IMR-90 (cell line): ENCODE measurements at regions of chr1 and their contacts with region 1.

Region 1: DNA sequence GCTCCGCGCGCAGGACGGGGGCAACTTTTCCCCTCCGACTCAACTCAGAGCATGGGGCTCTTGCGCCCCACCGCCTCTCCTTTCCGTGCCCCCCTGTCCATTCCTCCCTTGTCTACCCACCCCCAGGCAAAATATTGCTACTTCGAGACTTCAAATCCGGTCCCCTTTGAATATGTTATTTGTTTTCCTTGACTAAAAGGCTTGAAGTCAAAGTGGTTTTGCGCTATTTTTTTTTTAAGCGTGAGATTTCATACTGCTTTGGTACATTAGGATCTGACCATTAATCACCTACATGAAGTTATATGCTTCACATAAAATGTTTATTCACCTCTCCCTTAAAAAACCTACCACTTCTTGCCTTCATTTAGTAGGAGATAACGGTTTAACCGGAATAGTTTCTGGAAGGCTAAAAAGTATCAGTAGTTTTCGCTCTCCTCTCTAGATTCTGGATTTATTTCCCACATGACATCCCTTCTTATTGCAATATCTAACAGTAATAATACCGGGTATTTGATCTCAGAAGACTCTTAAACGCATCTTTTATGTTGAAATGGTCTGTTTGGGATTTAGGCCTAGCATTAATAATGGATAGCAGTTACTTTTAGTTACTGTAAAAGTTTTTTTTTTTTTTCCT is 1.6 kb downstream of the NFIA start:
- DNase-seq: no peak
- ATAC-seq: no peak
- H3K4me3 ChIP-seq: peak overlapping the region; percentile 65
- H3K27ac ChIP-seq: 0 out of 2 replicates have a peak overlapping the region, but pooled peaks have one; percentile 15
- H3K4me1 ChIP-seq: no peaks in the 10 kb centered on the region
- H3K27me3 ChIP-seq: no peaks in the 10 kb centered on the region
- CTCF ChIP-seq: no peak
- POLR2A ChIP-seq: no peak
- RAD21 ChIP-seq: no peak

Region 2: GRCh38 chr1:61098333-61098732 is 14.4 kb after region 1 on chr1:
- CTCF ChIA-PET with region 1: no interaction called
- POLR2A ChIA-PET with region 1: no interaction called
- dilution Hi-C with region 1: no loop called
- in situ Hi-C with region 1: no loop called
- intact Hi-C with region 1: loop called (anchors 2 kb)
- DNase-seq: no peak
- ATAC-seq: no peak
- H3K4me3 ChIP-seq: no peak overlapping the region
- H3K27ac ChIP-seq: no peak overlapping the region
- H3K4me1 ChIP-seq: no peaks in the 10 kb centered on the region
- H3K27me3 ChIP-seq: no peaks in the 10 kb centered on the region
- CTCF ChIP-seq: no peak
- POLR2A ChIP-seq: no peak
- RAD21 ChIP-seq: no peak

Region 3: GRCh38 chr1:61184040-61184713 is 100.3 kb after region 1 on chr1:
- CTCF ChIA-PET with region 1: no interaction called
- POLR2A ChIA-PET with region 1: no interaction called
- dilution Hi-C with region 1: no loop called
- in situ Hi-C with region 1: no loop called
- intact Hi-C with region 1: loop called (anchors 2 kb)
- DNase-seq: peak; percentile 63
- ATAC-seq: peak; percentile 67
- H3K4me3 ChIP-seq: peak overlapping the region; percentile 8; the same call in 1 of the 2 replicates
- H3K27ac ChIP-seq: peak overlapping the region; percentile 77; the same call in 1 of the 2 replicates
- H3K4me1 ChIP-seq: peaks cover 6% of the 10 kb centered on the region
- H3K27me3 ChIP-seq: no peaks in the 10 kb centered on the region
- CTCF ChIP-seq: no peak
- POLR2A ChIP-seq: no peak
- RAD21 ChIP-seq: no peak

Region 4: DNA sequence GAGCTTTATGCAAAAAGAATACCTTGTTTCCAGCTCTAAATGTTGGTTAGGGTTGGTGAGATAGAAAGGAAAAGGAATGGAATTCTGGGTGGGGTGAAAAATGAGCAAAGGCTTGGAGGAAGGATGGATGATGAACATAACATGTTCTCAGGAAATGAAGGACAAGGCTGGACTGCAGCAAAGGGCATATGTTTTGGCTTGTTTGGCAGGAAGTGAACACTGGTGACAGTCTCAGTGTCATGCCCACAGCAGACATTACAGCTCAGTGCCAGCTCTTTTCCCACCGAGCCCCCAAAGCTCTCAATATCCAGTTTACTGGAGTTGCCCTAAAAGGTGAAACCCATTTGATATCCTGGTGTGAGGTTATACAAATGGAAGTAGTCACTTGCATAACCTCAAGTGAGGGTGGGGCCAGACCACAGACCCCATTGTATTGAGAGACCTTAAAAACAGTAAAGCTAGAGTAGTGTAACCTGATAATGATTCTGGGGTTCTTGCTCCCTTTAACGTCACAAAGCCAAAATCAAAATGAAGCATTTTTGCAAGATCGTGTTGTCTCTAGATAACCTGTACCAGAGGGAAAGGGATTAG is 269.0 kb after region 1 on chr1:
- CTCF ChIA-PET with region 1: no interaction called
- POLR2A ChIA-PET with region 1: no interaction called
- dilution Hi-C with region 1: no loop called
- in situ Hi-C with region 1: no loop called
- intact Hi-C with region 1: no loop called
- DNase-seq: no peak
- ATAC-seq: no peak
- H3K4me3 ChIP-seq: no peak overlapping the region
- H3K27ac ChIP-seq: no peak overlapping the region
- H3K4me1 ChIP-seq: no peaks in the 10 kb centered on the region
- H3K27me3 ChIP-seq: no peaks in the 10 kb centered on the region
- CTCF ChIP-seq: no peak
- POLR2A ChIP-seq: no peak
- RAD21 ChIP-seq: no peak